GM12878 (cell line): ENCODE measurements at regions of chr1 and their contacts with region 1.

Region 1: GRCh38 chr1:206030714-206031113 is 7.0 kb upstream of the CTSE start:
- DNase-seq: peak; percentile 66
- ATAC-seq: peak; percentile 99
- H3K4me3 ChIP-seq: no peak overlapping the region
- H3K27ac ChIP-seq: no peak overlapping the region
- H3K4me1 ChIP-seq: peaks cover 15% of the 10 kb centered on the region
- H3K27me3 ChIP-seq: no peaks in the 10 kb centered on the region
- CTCF ChIP-seq: peak; percentile 85 to 95 (median 95)
- EP300 ChIP-seq: no peak
- POLR2A ChIP-seq: no peak
- RAD21 ChIP-seq: peak; percentile 92

Region 2: DNA sequence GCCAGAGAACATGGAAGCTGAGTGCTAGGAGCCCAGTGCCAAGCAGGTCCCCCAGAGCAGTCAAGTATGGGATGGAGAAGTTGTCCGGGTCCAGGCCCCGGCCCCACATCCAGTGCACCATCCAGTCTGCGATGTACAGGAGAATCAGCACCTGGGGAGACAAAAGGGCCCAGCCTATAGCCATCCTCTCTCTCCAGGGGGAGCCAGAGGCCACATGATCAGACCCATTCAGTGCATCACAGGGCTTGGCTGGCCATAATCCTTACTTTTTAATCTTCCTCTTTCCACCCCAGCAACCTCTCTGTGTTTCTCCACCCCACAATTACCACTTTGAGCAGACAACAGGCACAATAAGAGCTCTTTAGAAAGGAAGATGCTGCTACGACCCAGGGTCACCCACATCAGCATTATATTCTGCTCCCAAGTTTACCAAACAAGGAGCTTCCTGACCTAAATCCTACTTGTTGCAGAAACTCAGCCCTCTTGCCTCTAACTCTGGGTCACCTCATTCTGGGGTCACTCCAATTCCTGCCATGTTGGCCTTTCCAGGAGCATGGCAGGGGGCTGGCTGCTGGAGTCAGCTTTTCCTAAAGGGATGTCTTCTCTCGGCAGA is 239.0 kb before region 1 on chr1:
- CTCF ChIA-PET with region 1: interaction called, 12 read pairs
- POLR2A ChIA-PET with region 1: no interaction called
- RAD21 ChIA-PET with region 1: no interaction called
- SMC1A ChIA-PET with region 1: no interaction called
- in situ Hi-C with region 1: no loop called
- intact Hi-C with region 1: no loop called
- DNase-seq: no peak
- ATAC-seq: peak; percentile 98
- H3K4me3 ChIP-seq: no peak overlapping the region
- H3K27ac ChIP-seq: no peak overlapping the region
- H3K4me1 ChIP-seq: peaks cover 7% of the 10 kb centered on the region
- H3K27me3 ChIP-seq: no peaks in the 10 kb centered on the region; a peak in 1 of 4 replicates
- CTCF ChIP-seq: peak; percentile 87 to 94 (median 91); a peak in 5 of 6 replicates
- EP300 ChIP-seq: no peak
- POLR2A ChIP-seq: no peak
- RAD21 ChIP-seq: peak; percentile 78

Region 3: GRCh38 chr1:205939690-205940330 is 90.9 kb before region 1 on chr1:
- CTCF ChIA-PET with region 1: no interaction called
- POLR2A ChIA-PET with region 1: no interaction called
- RAD21 ChIA-PET with region 1: no interaction called
- SMC1A ChIA-PET with region 1: no interaction called
- in situ Hi-C with region 1: no loop called
- intact Hi-C with region 1: no loop called
- DNase-seq: no peak
- ATAC-seq: peak; percentile 52
- H3K4me3 ChIP-seq: no peak overlapping the region
- H3K27ac ChIP-seq: no peak overlapping the region
- H3K4me1 ChIP-seq: no peaks in the 10 kb centered on the region
- H3K27me3 ChIP-seq: peaks cover 2 to 9% of the 10 kb centered on the region in 2 experiments; a peak in 3 of 4 replicates
- CTCF ChIP-seq: 0 out of 6 replicates have a peak, but pooled peaks of 1 of the 3 experiments have one; percentile 13
- EP300 ChIP-seq: no peak
- POLR2A ChIP-seq: no peak
- RAD21 ChIP-seq: no peak

Region 4: GRCh38 chr1:205967555-205968335 is 63.0 kb before region 1 on chr1:
- CTCF ChIA-PET with region 1: no interaction called
- POLR2A ChIA-PET with region 1: no interaction called
- RAD21 ChIA-PET with region 1: no interaction called
- SMC1A ChIA-PET with region 1: no interaction called
- in situ Hi-C with region 1: no loop called
- intact Hi-C with region 1: no loop called
- DNase-seq: no peak
- ATAC-seq: no peak
- H3K4me3 ChIP-seq: no peak overlapping the region
- H3K27ac ChIP-seq: no peak overlapping the region
- H3K4me1 ChIP-seq: no peaks in the 10 kb centered on the region
- H3K27me3 ChIP-seq: peaks cover 0 to 2% of the 10 kb centered on the region in 2 experiments; a peak in 3 of 4 replicates
- CTCF ChIP-seq: no peak
- EP300 ChIP-seq: no peak
- POLR2A ChIP-seq: no peak
- RAD21 ChIP-seq: no peak

Region 5: GRCh38 chr1:205983925-205984725 is 46.6 kb before region 1 on chr1:
- CTCF ChIA-PET with region 1: interaction called, 107 read pairs
- POLR2A ChIA-PET with region 1: no interaction called
- RAD21 ChIA-PET with region 1: interaction called, 54 read pairs
- SMC1A ChIA-PET with region 1: interaction called, 38 read pairs
- in situ Hi-C with region 1: no loop called
- intact Hi-C with region 1: loop called (anchors 1 kb)
- DNase-seq: no peak
- ATAC-seq: peak; percentile 98
- H3K4me3 ChIP-seq: no peak overlapping the region
- H3K27ac ChIP-seq: no peak overlapping the region
- H3K4me1 ChIP-seq: no peaks in the 10 kb centered on the region
- H3K27me3 ChIP-seq: no peaks in the 10 kb centered on the region; a peak in 2 of 4 replicates
- CTCF ChIP-seq: peak; percentile 85 to 90 (median 88)
- EP300 ChIP-seq: no peak
- POLR2A ChIP-seq: no peak
- RAD21 ChIP-seq: peak; percentile 90

Region 6: DNA sequence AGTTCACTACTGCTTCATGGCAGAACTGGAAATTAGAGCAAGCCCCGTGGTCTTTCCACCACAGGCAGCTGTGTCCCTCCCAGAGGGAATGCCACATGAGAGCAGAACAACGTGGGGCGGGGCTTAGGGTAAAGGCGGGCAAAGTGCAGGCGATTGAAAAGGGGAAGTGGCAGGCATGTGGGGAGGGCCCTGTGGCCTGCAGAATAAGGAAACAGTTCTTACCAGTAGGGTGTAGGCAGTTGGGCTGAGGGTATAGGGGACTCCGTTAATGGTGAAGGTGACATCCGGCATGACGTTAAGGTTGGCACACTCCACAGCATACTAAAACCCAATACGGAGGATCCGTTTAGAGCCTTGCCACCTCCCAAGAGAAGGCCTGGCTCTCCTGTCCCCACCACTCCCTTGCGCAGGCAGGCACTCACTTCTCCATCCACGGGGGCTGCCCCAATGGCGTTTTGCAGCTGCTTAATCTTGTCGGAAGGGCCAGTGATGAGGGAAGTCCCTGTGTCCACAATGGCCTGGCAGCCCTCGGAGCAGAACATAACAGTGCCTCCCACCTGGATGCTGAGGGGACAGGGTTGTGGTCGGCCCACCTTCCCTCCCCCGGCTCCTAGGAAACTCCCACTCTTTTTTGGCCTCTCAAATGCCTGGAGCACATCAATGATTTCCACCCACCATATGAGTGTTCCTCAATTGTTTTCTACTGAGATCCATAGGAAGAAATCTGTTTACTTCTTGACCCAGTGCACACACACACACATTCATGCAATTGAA is 18.4 kb before region 1 on chr1:
- CTCF ChIA-PET with region 1: interaction called, 14 read pairs
- POLR2A ChIA-PET with region 1: interaction called, 3 read pairs
- RAD21 ChIA-PET with region 1: interaction called, 4 read pairs
- SMC1A ChIA-PET with region 1: interaction called, 8 read pairs
- in situ Hi-C with region 1: no loop called
- intact Hi-C with region 1: no loop called
- DNase-seq: peak; percentile 66
- ATAC-seq: peak; percentile 99
- H3K4me3 ChIP-seq: no peak overlapping the region
- H3K27ac ChIP-seq: no peak overlapping the region
- H3K4me1 ChIP-seq: peaks cover 17% of the 10 kb centered on the region
- H3K27me3 ChIP-seq: no peaks in the 10 kb centered on the region
- CTCF ChIP-seq: no peak
- EP300 ChIP-seq: peak in 1 of 2 experiments; percentile 69; a peak in 2 of 4 replicates
- POLR2A ChIP-seq: peak; percentile 55
- RAD21 ChIP-seq: no peak

Region 7: GRCh38 chr1:206050655-206051235 is 20.0 kb after region 1 on chr1:
- CTCF ChIA-PET with region 1: interaction called, 72 read pairs
- POLR2A ChIA-PET with region 1: interaction called, 5 read pairs
- RAD21 ChIA-PET with region 1: interaction called, 19 read pairs
- SMC1A ChIA-PET with region 1: interaction called, 63 read pairs
- in situ Hi-C with region 1: no loop called
- intact Hi-C with region 1: loop called (anchors 1 kb)
- DNase-seq: peak; percentile 100
- ATAC-seq: peak; percentile 88
- H3K4me3 ChIP-seq: no peak overlapping the region
- H3K27ac ChIP-seq: peak overlapping the region; percentile 91
- H3K4me1 ChIP-seq: peaks cover 53% of the 10 kb centered on the region
- H3K27me3 ChIP-seq: no peaks in the 10 kb centered on the region
- CTCF ChIP-seq: 0 out of 6 replicates have a peak, but pooled peaks of 1 of the 3 experiments have one; percentile 3
- EP300 ChIP-seq: peak; percentile 97 to 98
- POLR2A ChIP-seq: peak; percentile 69
- RAD21 ChIP-seq: 0 out of 2 replicates have a peak, but pooled peaks have one; percentile 15

Region 8: DNA sequence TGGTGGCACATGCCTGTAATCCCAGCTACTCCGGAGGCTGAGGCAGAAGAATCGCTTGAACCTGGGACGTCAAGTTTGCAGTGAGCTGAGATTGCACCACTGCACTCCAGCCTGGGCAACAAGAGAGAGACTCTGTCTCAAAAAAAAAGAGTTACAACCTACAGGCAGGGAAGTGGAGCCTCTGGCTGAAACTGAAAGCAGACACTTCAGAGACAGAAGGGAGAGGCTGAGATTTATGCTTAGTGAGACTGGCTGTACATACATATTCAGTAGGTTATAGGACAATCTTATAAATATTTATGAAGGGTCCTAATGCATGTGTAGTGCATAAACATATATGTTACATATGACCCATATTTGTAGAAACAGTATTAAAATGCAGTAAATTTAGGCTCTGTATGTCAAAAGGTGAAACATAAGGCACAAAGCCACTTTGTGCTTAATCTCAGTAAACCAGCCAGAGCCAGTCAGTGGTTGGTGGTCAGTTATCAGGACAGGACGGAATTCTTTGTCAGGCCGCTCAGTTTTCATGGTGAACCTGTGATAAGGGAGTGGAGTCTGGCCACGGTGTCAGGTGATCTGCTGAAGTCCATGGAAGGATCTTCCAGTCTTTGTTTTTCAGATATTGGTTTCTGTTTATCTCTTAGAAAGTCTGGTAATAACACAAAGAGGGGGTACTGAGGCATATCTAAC is 35.9 kb after region 1 on chr1:
- CTCF ChIA-PET with region 1: interaction called, 8 read pairs
- POLR2A ChIA-PET with region 1: no interaction called
- RAD21 ChIA-PET with region 1: no interaction called
- SMC1A ChIA-PET with region 1: interaction called, 4 read pairs
- in situ Hi-C with region 1: no loop called
- intact Hi-C with region 1: loop called (anchors 5 kb)
- DNase-seq: no peak
- ATAC-seq: peak; percentile 93
- H3K4me3 ChIP-seq: no peak overlapping the region
- H3K27ac ChIP-seq: no peak overlapping the region
- H3K4me1 ChIP-seq: peaks cover 26% of the 10 kb centered on the region
- H3K27me3 ChIP-seq: no peaks in the 10 kb centered on the region
- CTCF ChIP-seq: no peak
- EP300 ChIP-seq: no peak
- POLR2A ChIP-seq: no peak
- RAD21 ChIP-seq: no peak

Region 9: GRCh38 chr1:206106328-206107167 is 75.8 kb after region 1 on chr1:
- CTCF ChIA-PET with region 1: interaction called, 384 read pairs
- POLR2A ChIA-PET with region 1: no interaction called
- RAD21 ChIA-PET with region 1: interaction called, 169 read pairs
- SMC1A ChIA-PET with region 1: interaction called, 329 read pairs
- in situ Hi-C with region 1: loop called (anchors 5 kb)
- intact Hi-C with region 1: loop called (anchors 1 kb)
- DNase-seq: peak; percentile 39
- ATAC-seq: peak; percentile 98
- H3K4me3 ChIP-seq: no peak overlapping the region
- H3K27ac ChIP-seq: no peak overlapping the region
- H3K4me1 ChIP-seq: no peaks in the 10 kb centered on the region
- H3K27me3 ChIP-seq: peaks cover 0 to 2% of the 10 kb centered on the region in 2 experiments; a peak in 2 of 4 replicates
- CTCF ChIP-seq: peak; percentile 83 to 96 (median 87)
- EP300 ChIP-seq: no peak
- POLR2A ChIP-seq: no peak
- RAD21 ChIP-seq: peak; percentile 98

Region 10: GRCh38 chr1:206128196-206128595 is 97.5 kb after region 1 on chr1:
- CTCF ChIA-PET with region 1: no interaction called
- POLR2A ChIA-PET with region 1: no interaction called
- RAD21 ChIA-PET with region 1: no interaction called
- SMC1A ChIA-PET with region 1: no interaction called
- in situ Hi-C with region 1: no loop called
- intact Hi-C with region 1: no loop called
- DNase-seq: no peak
- ATAC-seq: no peak
- H3K4me3 ChIP-seq: no peak overlapping the region
- H3K27ac ChIP-seq: no peak overlapping the region
- H3K4me1 ChIP-seq: no peaks in the 10 kb centered on the region
- H3K27me3 ChIP-seq: peaks cover 2 to 10% of the 10 kb centered on the region in 2 experiments; a peak in 3 of 4 replicates
- CTCF ChIP-seq: no peak
- EP300 ChIP-seq: no peak
- POLR2A ChIP-seq: no peak
- RAD21 ChIP-seq: no peak